ENCODE measurements at regions of chr3 and their contacts with region 1.

Region 1: GRCh38 chr3:31550452-31551251 is 17.9 kb downstream of the STT3B start:
- DNase-seq: peak in 1 of 4 donors; percentile 34
- ATAC-seq: peak; percentile 53
- H3K4me3 ChIP-seq: no peak overlapping the region
- H3K27ac ChIP-seq: no peak overlapping the region
- H3K4me1 ChIP-seq: peaks cover 18% of the 10 kb centered on the region
- H3K27me3 ChIP-seq: no peaks in the 10 kb centered on the region
- CTCF ChIP-seq: peak; percentile 34 to 75 (median 62)
- POLR2A ChIP-seq: no peak

Region 2: DNA sequence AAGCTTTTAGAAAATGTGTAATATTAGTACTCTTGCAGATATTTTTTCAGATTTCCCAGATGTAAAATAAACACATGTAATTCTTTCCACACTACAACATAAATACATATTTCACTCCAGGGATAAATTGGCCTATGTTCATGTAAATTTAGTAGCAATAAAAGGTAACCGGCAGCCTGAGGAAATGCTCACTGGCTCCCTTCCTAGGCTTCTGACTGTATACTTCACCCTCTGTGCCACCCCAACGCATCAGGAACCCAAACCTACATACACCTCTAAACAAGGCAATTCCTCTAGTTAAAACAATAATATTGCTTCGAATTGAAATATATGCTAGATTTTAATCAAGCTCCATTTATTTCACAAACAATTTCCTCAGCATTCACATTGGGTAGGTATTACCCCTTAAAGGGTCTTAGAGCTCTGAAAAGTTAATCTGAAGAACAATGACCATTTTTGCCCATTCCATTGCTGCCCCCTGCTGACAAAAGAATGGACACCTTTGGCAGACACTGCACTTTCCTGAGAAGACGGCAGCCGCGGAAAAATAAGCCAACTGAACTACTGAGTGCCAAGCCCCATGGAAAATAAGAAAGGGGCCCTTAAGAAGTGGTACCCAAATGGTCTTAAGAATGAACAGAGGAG is 217.9 kb after region 1 on chr3:
- intact Hi-C with region 1: loop called (anchors 10 kb)
- DNase-seq: peak; percentile 61 to 72 (median 66)
- ATAC-seq: peak; percentile 38
- H3K4me3 ChIP-seq: no peak overlapping the region
- H3K27ac ChIP-seq: no peak overlapping the region
- H3K4me1 ChIP-seq: no peaks in the 10 kb centered on the region
- H3K27me3 ChIP-seq: no peaks in the 10 kb centered on the region
- CTCF ChIP-seq: peak; percentile 29 to 76 (median 68)
- POLR2A ChIP-seq: no peak

Region 3: GRCh38 chr3:31839144-31839917 is 288.7 kb after region 1 on chr3:
- intact Hi-C with region 1: no loop called
- DNase-seq: no peak
- ATAC-seq: no peak
- H3K4me3 ChIP-seq: no peak overlapping the region
- H3K27ac ChIP-seq: no peak overlapping the region
- H3K4me1 ChIP-seq: no peaks in the 10 kb centered on the region
- H3K27me3 ChIP-seq: no peaks in the 10 kb centered on the region
- CTCF ChIP-seq: no peak
- POLR2A ChIP-seq: no peak

Measured in body of pancreas (tissue), 4 donors.